Left ventricle myocardium superior (tissue), 1 donor: ENCODE measurements at regions of chr7 and their contacts with region 1.

Region 1: DNA sequence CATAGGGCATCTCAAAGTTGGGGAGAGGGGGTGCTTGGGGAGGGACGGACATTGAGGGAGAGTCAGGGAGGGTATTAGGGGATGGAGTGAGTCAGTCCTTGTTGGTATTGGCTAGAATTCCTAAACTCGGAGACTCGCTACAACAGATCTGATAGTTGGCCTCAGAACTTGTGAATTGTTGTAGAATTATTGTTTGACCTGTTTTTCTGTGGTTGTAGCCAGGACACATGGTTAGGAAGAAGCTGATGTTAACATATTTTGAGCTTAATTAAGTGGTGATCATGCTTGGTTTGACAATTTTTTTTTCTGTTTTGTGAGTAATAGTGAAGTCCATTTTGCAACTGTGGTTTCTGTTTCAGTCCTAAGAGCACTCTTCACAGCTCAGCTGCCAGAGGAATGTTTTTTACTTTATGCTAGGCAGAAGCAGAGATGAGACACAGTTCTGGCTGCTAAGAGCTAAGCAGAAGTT is 1190.3 kb upstream of the C7orf33 start:
- DNase-seq: no peak
- ATAC-seq: peak; percentile 59

Region 2: DNA sequence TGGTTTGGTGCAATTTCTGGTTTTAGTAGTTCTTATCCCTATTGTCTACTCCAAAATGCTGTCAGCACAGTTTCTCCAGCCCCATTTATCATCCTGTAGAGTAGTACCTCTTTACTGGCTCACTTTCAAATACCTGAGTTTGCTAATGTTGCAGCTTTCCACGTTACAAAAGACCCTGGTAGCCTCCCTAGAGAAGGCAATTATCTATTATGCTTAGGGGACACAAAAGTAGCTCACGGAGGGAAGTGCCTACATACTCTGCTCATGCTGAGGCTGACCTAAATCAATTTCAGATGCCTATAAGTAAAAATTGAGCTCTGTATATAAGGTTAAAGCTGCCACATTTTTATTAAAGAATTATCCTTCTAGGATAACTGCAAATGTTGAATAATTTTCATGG is 680.1 kb before region 1 on chr7:
- intact Hi-C with region 1: loop called (anchors 10 kb)
- DNase-seq: no peak
- ATAC-seq: no peak

Region 3: DNA sequence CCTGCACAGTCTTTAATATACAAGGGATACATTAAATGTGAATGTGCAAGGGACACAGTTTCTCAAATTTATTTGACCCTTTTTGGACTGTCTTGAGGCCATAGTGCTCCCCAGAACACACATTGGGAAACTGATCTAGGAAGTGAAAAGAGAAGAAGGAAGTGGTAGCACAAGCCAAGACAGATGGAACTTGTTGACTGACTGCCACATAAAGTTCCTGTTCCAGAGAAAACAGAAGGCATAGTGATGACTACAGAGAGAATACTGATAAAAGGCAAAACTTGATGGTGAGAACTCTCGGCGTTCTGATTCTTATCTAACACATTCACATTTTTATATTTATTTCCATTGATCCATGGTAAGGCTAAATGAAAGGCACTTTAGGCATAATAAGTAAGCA is 67.3 kb before region 1 on chr7:
- intact Hi-C with region 1: no loop called
- DNase-seq: no peak
- ATAC-seq: no peak

Region 4: GRCh38 chr7:147363101-147363500 is 37.2 kb before region 1 on chr7:
- intact Hi-C with region 1: no loop called
- DNase-seq: no peak
- ATAC-seq: no peak

Region 5: GRCh38 chr7:147523056-147523455 is 122.8 kb after region 1 on chr7:
- intact Hi-C with region 1: no loop called
- DNase-seq: no peak
- ATAC-seq: no peak